ENCODE measurements at regions of chr6 and their contacts with region 1.

Region 1: DNA sequence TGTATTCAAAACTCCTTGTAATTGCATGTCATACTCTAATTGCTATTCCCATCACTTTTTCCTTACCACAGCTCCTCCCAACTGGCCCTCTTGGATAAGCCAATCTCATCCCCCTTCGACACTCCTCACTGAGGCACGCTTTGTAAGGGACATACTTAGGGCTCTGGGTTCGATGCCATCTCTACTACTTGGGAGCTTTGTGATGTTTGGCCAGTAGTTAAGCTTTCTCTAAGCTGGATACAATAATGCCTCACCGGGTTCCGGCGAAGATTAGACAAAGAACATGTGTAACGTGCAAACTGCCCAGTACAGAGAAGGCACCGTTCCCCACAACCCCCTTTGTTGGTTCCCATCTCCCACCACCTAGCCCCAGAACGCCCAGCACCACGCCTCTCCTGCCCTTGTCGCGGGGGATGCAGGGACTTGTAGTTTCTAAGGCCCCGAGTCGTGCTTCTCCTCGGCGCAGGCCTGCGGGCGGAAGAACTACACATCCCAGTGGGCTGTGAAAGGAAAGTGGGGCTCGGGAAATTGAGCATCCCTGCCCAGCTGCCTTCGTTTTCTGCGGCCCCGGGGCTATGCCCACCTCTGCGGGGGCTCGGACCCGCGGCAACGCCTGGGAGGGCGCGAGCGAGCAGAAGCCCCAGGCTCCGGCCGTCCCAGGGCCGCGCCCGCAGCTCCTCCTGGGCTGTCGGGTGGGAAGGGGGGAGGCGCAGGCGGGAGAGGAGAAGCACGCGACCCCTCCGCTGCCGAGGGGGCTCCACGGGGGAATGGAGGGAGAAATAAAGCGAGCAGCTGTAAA is 1.1 kb upstream of the ZDHHC14 start:
- DNase-seq: peak; percentile 92
- H3K4me3 ChIP-seq: peak overlapping the region; percentile 98
- H3K27ac ChIP-seq: peak overlapping the region; percentile 46
- H3K4me1 ChIP-seq: peaks cover 21% of the 10 kb centered on the region
- CTCF ChIP-seq: no peak

Region 2: GRCh38 chr6:157323255-157323965 is 56.4 kb before region 1 on chr6 and contains the start of gene TMEM242:
- CTCF ChIA-PET with region 1: no interaction called
- POLR2A ChIA-PET with region 1: interaction called, 11 read pairs
- intact Hi-C with region 1: loop called (anchors 1 kb)
- DNase-seq: peak; percentile 91
- H3K4me3 ChIP-seq: peak within 1 kb of the TSS; percentile 77
- H3K27ac ChIP-seq: peak within 1 kb of the TSS; percentile 6
- H3K4me1 ChIP-seq: peaks cover 14% of the 10 kb centered on the region
- CTCF ChIP-seq: peak; percentile 27; the same call in 1 of the 2 replicates
- total RNA-seq, gene TMEM242: 4.5 and 8.2 TPM in 2 replicates

Region 3: GRCh38 chr6:157449610-157450009 is 69.8 kb after region 1 on chr6:
- CTCF ChIA-PET with region 1: no interaction called
- POLR2A ChIA-PET with region 1: no interaction called
- intact Hi-C with region 1: no loop called
- DNase-seq: no peak
- H3K4me3 ChIP-seq: no peak overlapping the region
- H3K27ac ChIP-seq: no peak overlapping the region
- H3K4me1 ChIP-seq: no peaks in the 10 kb centered on the region
- CTCF ChIP-seq: no peak

Region 4: GRCh38 chr6:157494132-157494710 is 114.4 kb after region 1 on chr6:
- CTCF ChIA-PET with region 1: no interaction called
- POLR2A ChIA-PET with region 1: no interaction called
- intact Hi-C with region 1: no loop called
- DNase-seq: no peak
- H3K4me3 ChIP-seq: no peak overlapping the region
- H3K27ac ChIP-seq: no peak overlapping the region
- H3K4me1 ChIP-seq: no peaks in the 10 kb centered on the region
- CTCF ChIP-seq: no peak

Region 5: DNA sequence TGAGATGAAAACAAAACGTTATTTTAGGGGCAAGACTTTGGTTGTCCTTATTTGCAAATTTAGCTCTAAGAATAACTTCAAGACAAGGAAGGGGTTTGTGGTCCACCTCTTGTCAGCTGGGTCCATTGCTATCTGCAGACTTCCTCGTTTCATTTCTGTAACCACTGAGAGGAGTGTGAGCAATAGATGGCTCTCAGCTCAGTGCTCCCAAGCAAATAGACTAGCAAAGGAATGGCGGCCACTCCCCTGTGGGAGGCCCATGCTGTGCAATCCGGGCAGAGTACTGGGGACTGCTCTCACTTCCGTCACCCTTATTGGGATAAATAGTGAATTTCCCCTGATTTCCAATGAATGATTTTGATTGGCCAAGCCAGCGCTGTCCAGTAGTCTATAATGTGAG is 177.7 kb after region 1 on chr6:
- CTCF ChIA-PET with region 1: no interaction called
- POLR2A ChIA-PET with region 1: interaction called, 5 read pairs
- intact Hi-C with region 1: loop called (anchors 5 kb)
- DNase-seq: peak; percentile 77
- H3K4me3 ChIP-seq: peak overlapping the region; percentile 50
- H3K27ac ChIP-seq: peak overlapping the region; percentile 79
- H3K4me1 ChIP-seq: peaks cover 66% of the 10 kb centered on the region
- CTCF ChIP-seq: no peak

Region 6: DNA sequence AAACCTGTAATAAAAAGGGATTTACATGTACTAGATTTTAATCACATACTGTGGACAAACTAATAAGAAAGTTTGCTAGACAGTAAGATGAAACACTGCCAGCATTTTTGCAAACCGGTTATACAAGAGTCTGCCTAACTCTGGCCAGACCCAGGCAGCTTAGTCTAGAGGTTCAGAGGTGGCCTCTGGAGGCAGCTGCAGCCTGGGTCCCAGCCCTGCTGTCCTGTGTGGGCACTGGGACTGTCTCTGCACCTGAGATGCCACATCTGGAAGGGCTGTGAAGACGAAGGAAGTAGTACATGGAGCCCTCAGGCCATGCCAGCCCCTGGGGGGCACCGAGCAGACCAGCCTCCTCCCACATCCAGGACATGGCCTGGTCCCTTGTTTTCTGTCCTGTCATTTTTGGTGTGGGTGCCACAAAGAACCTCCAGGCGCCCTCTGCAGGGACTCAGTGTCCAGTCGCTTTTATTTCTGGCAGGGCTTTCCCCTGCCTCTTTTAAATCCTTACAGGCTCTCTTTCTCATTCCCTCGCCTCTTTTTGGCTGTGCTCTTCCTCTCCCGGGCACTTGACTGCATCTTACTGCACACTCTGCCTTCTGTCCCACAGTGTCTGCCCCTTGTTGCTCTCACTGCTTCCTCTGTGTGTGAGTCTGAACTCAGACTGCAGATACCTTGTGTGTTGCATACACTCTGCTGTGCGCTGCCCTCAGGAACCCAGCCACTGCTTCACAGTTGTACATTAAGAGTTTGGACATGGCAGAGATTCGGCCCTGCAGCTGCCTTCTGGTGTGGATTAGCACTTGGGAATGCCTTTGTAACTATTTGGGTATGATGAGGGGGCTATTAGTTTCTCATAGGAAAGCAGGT is 217.8 kb after region 1 on chr6:
- CTCF ChIA-PET with region 1: no interaction called
- POLR2A ChIA-PET with region 1: no interaction called
- intact Hi-C with region 1: loop called (anchors 2 kb)
- DNase-seq: peak; percentile 71
- H3K4me3 ChIP-seq: no peak overlapping the region
- H3K27ac ChIP-seq: no peak overlapping the region
- H3K4me1 ChIP-seq: peaks cover 31% of the 10 kb centered on the region
- CTCF ChIP-seq: peak; percentile 79

Region 7: DNA sequence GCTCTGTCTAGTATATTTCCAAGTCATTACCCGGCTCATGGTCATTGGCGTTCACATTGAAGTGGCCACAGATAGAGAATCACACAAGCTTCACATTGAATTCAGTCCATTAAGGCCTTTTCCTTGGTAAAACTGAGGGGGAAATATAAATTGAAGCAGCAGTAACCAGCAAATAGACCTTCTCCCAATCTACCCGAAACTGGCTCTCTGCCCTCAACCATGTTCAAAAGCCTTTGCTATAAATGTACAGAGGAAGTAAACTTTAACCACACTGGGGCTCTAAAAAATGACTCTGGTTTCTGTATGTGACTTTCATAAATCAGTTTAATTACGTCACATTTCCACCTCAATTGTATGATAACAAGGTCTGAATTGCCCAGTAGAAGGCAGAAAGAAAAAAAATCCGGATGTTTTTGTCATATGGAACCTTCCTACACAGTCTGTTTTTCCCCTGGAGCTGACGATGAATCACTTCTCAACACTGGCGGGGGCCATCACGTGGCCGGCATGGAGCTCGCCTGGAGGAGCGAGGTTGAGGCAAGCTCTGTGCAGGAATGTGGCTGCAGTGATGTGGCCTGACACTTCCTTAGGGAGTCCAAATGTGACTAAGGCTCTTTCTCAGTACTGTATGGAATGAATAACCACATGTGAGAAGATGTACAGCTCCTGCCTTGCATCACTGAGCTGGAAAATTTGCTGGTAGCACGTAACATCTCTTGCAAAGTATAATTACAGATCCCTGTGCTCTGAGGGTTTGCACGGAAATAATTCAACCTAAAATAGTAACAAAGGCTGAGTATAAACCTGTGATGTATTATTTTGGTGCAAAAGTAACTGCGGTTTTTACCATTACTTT is 384.6 kb after region 1 on chr6:
- CTCF ChIA-PET with region 1: no interaction called
- POLR2A ChIA-PET with region 1: interaction called, 3 read pairs
- intact Hi-C with region 1: loop called (anchors 2 kb)
- DNase-seq: peak; percentile 84
- H3K4me3 ChIP-seq: peak overlapping the region; percentile 53
- H3K27ac ChIP-seq: peak overlapping the region; percentile 50
- H3K4me1 ChIP-seq: peaks cover 58% of the 10 kb centered on the region
- CTCF ChIP-seq: no peak

Measured in OCI-LY7 (cell line).